HCT116 (cell line): ENCODE measurements at regions of chr2 and their contacts with region 1.

Region 1: DNA sequence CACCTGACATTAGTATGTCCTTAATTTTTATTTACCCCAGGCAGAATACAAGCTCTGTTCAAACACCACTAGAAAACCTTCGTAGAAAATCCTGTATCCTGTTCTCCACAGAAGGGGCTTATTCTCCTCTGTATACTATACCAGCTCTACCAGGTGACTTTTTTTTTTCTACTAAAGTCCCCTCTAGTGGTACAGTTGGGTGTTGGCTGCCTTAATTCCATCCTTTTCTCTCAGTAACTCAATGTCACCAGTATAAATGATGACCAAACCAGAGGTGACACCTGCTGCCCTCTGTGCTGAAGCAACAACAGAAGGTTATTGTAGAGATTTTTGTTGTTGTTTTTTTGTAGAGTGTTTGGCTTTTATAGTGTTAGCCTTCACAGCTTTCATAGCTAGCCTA is 1322.0 kb downstream of the LRP1B start:
- DNase-seq: peak; percentile 31
- ATAC-seq: peak; percentile 86
- H3K4me3 ChIP-seq: no peak overlapping the region
- H3K27ac ChIP-seq: no peak overlapping the region
- H3K4me1 ChIP-seq: no peaks in the 10 kb centered on the region
- H3K27me3 ChIP-seq: no peaks in the 10 kb centered on the region
- CTCF ChIP-seq: peak; percentile 48 to 55 (median 54); a peak in 5 of 6 replicates
- POLR2A ChIP-seq: no peak
- RAD21 ChIP-seq: peak; percentile 63

Region 2: DNA sequence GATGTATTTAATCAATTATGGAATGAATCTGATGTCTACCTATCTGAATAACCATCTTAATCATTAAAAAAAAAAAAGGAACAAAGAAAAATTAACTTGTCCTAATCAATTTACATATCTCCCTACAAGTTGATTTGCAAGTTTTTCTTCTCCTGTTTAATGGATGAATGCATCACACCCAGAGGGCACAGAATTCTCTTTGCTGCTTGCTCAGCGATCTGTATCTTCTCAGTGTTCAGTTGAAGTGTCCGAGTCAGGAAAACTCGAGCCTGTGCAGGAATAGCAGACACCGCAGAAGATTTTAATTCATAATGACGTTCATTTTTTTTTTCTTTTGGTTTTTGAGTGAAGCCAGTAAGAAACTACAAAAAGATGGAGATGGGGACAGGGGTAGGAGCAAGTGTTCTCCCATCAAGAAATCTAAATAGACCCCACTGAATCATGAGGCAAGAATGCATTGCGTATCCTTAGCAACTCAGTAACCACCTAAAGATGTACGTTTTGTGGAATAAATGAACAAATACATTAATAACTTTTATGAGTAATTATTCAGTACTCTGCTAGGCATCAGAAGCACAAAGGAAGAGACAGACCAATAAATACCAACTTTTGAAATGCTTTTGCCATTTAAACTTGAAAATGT is 646.5 kb after region 1 on chr2:
- CTCF ChIA-PET with region 1: no interaction called
- POLR2A ChIA-PET with region 1: no interaction called
- RAD21 ChIA-PET with region 1: no interaction called
- intact Hi-C with region 1: loop called (anchors 5 kb)
- DNase-seq: no peak
- ATAC-seq: no peak
- H3K4me3 ChIP-seq: no peak overlapping the region
- H3K27ac ChIP-seq: no peak overlapping the region
- H3K4me1 ChIP-seq: no peaks in the 10 kb centered on the region
- H3K27me3 ChIP-seq: no peaks in the 10 kb centered on the region
- CTCF ChIP-seq: no peak
- POLR2A ChIP-seq: no peak
- RAD21 ChIP-seq: no peak